Ovary (tissue), 10 donors: ENCODE measurements at regions of chr15 and their contacts with region 1.

Region 1: GRCh38 chr15:49235446-49236124 is 65.5 kb downstream of the GALK2 start:
- DNase-seq: peak; percentile 51 to 77 (median 65)
- H3K4me3 ChIP-seq: no peak overlapping the region
- H3K27ac ChIP-seq: peak overlapping the region in 1 of 2 donors; percentile 37
- H3K4me1 ChIP-seq: peaks cover 2% of the 10 kb centered on the region
- H3K27me3 ChIP-seq: no peaks in the 10 kb centered on the region
- CTCF ChIP-seq: peak; percentile 59 to 85 (median 84)
- EP300 ChIP-seq: no peak
- POLR2A ChIP-seq: no peak

Region 2: DNA sequence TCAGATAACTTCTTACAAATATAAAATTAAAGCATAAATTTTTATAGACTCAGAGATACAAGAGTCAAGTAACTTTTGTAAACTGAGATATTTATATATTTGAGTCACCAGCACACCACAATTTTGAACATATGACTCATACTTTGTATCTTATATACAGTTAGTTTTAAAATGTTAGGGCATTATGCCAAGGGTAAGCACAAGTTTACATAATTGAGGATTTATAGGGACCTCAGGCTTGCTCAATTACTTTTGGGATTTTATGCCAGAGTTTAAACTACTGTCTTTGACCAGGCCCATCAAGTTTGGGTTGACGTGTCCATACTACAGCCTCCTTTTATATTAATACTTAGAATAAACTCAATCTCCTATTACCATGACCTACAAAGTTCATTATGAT is 180.1 kb after region 1 on chr15:
- intact Hi-C with region 1: loop called in 2 of 4 experiments (anchors 5 to 10 kb)
- DNase-seq: no peak
- H3K4me3 ChIP-seq: no peak overlapping the region
- H3K27ac ChIP-seq: no peak overlapping the region
- H3K4me1 ChIP-seq: no peaks in the 10 kb centered on the region
- H3K27me3 ChIP-seq: no peaks in the 10 kb centered on the region
- CTCF ChIP-seq: no peak
- EP300 ChIP-seq: no peak
- POLR2A ChIP-seq: no peak

Region 3: GRCh38 chr15:49421991-49422390 is 186.4 kb after region 1 on chr15:
- intact Hi-C with region 1: loop called in 2 of 4 experiments (anchors 5 to 10 kb)
- DNase-seq: peak; percentile 39 to 73 (median 68)
- H3K4me3 ChIP-seq: peak overlapping the region; percentile 51
- H3K27ac ChIP-seq: peak overlapping the region in 1 of 2 donors; percentile 66
- H3K4me1 ChIP-seq: no peaks in the 10 kb centered on the region
- H3K27me3 ChIP-seq: no peaks in the 10 kb centered on the region
- CTCF ChIP-seq: peak; percentile 58 to 93 (median 73)
- EP300 ChIP-seq: no peak
- POLR2A ChIP-seq: no peak

Region 4: GRCh38 chr15:49875392-49875791 is 639.8 kb after region 1 on chr15:
- intact Hi-C with region 1: no loop called
- DNase-seq: no peak
- H3K4me3 ChIP-seq: no peak overlapping the region
- H3K27ac ChIP-seq: no peak overlapping the region
- H3K4me1 ChIP-seq: peaks cover 22% of the 10 kb centered on the region
- H3K27me3 ChIP-seq: no peaks in the 10 kb centered on the region
- CTCF ChIP-seq: no peak
- EP300 ChIP-seq: no peak
- POLR2A ChIP-seq: no peak

Region 5: GRCh38 chr15:50003786-50004334 is 768.3 kb after region 1 on chr15:
- intact Hi-C with region 1: loop called in 1 of 4 experiments (anchors 5 kb)
- DNase-seq: peak; percentile 80 to 91 (median 89)
- H3K4me3 ChIP-seq: no peak overlapping the region
- H3K27ac ChIP-seq: no peak overlapping the region
- H3K4me1 ChIP-seq: no peaks in the 10 kb centered on the region
- H3K27me3 ChIP-seq: no peaks in the 10 kb centered on the region
- CTCF ChIP-seq: peak; percentile 35 to 79 (median 73)
- EP300 ChIP-seq: no peak
- POLR2A ChIP-seq: no peak

Region 6: DNA sequence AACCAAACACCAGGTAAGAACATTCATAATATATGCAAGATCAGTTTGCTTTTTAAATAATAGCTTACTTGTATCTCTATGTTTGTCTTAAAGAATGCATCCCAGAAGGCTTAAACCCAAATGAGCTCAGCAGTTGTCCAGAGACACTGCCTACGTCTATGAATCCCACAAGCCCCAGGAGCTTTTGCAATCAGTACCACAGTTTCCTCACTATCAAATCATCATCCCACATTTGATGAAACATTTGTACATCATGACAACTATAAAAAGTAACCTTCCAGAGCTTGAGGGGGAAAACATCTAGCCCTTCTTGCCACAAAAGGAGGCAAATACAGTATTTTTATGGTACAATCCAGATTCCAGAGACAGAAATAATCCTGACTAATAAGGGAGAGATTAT is 819.7 kb after region 1 on chr15:
- intact Hi-C with region 1: loop called in 1 of 4 experiments (anchors 5 kb)
- DNase-seq: no peak
- H3K4me3 ChIP-seq: no peak overlapping the region
- H3K27ac ChIP-seq: no peak overlapping the region
- H3K4me1 ChIP-seq: peaks cover 2% of the 10 kb centered on the region
- H3K27me3 ChIP-seq: no peaks in the 10 kb centered on the region
- CTCF ChIP-seq: no peak
- EP300 ChIP-seq: no peak
- POLR2A ChIP-seq: no peak